ENCODE measurements at regions of chr5 and their contacts with region 1.

Region 1: GRCh38 chr5:124649491-124650146 is 96.8 kb downstream of the ZNF608 start:
- DNase-seq: peak; percentile 98
- H3K4me3 ChIP-seq: peak overlapping the region; percentile 69
- H3K27ac ChIP-seq: peak overlapping the region; percentile 95
- H3K4me1 ChIP-seq: peaks cover 97% of the 10 kb centered on the region
- CTCF ChIP-seq: no peak

Region 2: GRCh38 chr5:123937230-123937629 is 712.4 kb before region 1 on chr5:
- CTCF ChIA-PET with region 1: no interaction called
- POLR2A ChIA-PET with region 1: no interaction called
- intact Hi-C with region 1: loop called (anchors 2 kb)
- DNase-seq: peak; percentile 77
- H3K4me3 ChIP-seq: no peak overlapping the region
- H3K27ac ChIP-seq: no peak overlapping the region
- H3K4me1 ChIP-seq: no peaks in the 10 kb centered on the region
- CTCF ChIP-seq: peak; percentile 84

Region 3: GRCh38 chr5:124162779-124163532 is 486.7 kb before region 1 on chr5:
- CTCF ChIA-PET with region 1: no interaction called
- POLR2A ChIA-PET with region 1: no interaction called
- intact Hi-C with region 1: loop called (anchors 5 kb)
- DNase-seq: peak; percentile 72
- H3K4me3 ChIP-seq: peak overlapping the region; percentile 19
- H3K27ac ChIP-seq: peak overlapping the region; percentile 59
- H3K4me1 ChIP-seq: peaks cover 15% of the 10 kb centered on the region
- CTCF ChIP-seq: no peak

Region 4: GRCh38 chr5:124524552-124525232 is 124.9 kb before region 1 on chr5:
- CTCF ChIA-PET with region 1: interaction called, 4 read pairs
- POLR2A ChIA-PET with region 1: interaction called, 4 read pairs
- intact Hi-C with region 1: loop called (anchors 1 kb)
- DNase-seq: peak; percentile 91
- H3K4me3 ChIP-seq: peak overlapping the region; percentile 3
- H3K27ac ChIP-seq: peak overlapping the region; percentile 56
- H3K4me1 ChIP-seq: peaks cover 25% of the 10 kb centered on the region
- CTCF ChIP-seq: peak; percentile 72

Region 5: GRCh38 chr5:124718380-124718789 is 68.8 kb after region 1 on chr5:
- CTCF ChIA-PET with region 1: interaction called, 3 read pairs
- POLR2A ChIA-PET with region 1: interaction called, 22 read pairs
- intact Hi-C with region 1: no loop called
- DNase-seq: no peak
- H3K4me3 ChIP-seq: peak overlapping the region; percentile 61
- H3K27ac ChIP-seq: peak overlapping the region; percentile 71
- H3K4me1 ChIP-seq: peaks cover 88% of the 10 kb centered on the region
- CTCF ChIP-seq: no peak

Region 6: GRCh38 chr5:124790895-124791732 is 141.5 kb after region 1 on chr5:
- CTCF ChIA-PET with region 1: no interaction called
- POLR2A ChIA-PET with region 1: no interaction called
- intact Hi-C with region 1: no loop called
- DNase-seq: no peak
- H3K4me3 ChIP-seq: no peak overlapping the region
- H3K27ac ChIP-seq: no peak overlapping the region
- H3K4me1 ChIP-seq: peaks cover 13% of the 10 kb centered on the region
- CTCF ChIP-seq: no peak

Region 7: DNA sequence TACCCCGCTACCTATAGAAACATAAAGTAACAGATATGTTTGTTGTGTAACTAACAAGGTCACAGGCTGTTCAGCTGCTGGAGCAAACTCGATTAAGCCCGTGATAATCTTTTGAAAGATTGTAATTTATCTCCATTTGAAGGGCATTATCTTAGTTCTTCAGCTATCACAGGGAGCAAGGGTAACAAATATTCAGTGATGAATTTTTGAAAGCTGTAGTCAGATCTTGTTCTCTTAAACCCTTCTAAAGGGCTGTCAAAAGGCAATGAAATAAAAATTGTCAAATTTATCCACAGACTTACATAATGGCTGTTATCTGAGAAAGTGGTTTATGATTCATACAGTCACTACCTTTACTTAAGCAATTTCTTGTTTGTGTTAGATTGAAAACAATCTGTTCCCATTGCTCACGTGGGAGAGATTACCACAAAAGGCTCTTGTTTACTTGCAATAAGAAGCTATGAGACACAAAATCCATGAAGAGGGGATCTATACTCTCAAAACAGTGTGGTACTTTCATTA is 175.1 kb after region 1 on chr5:
- CTCF ChIA-PET with region 1: no interaction called
- POLR2A ChIA-PET with region 1: no interaction called
- intact Hi-C with region 1: loop called (anchors 5 kb)
- DNase-seq: no peak
- H3K4me3 ChIP-seq: peak overlapping the region; percentile 46
- H3K27ac ChIP-seq: peak overlapping the region; percentile 80
- H3K4me1 ChIP-seq: peaks cover 33% of the 10 kb centered on the region
- CTCF ChIP-seq: no peak